ENCODE measurements at regions of chr16 and their contacts with region 1.

Region 1: DNA sequence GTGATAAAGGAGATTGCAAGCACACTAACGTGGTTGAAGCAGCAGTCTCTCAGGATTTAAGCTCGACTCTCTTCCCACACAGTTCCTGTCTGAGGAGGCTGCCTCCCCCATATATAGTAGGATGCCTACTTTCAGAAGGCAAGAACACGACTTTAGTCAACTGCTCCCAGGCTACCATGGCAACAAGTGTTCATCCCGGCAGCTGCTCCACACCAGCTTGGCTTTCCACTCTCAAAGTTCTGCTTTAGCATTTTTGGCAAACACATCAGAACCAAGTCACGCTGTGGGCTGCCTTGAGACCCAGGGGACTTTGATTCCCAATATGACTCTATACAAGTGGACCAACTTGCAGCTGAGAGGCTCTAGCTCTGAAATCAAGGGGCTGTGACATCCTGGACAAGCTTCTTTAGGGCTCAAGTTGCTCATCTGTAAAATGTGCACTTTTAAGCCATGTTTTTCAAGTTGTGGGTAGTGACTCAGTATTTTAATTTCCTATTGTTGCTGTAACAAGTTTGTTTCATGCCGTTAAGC is 16.5 kb downstream of the ZP2 start:
- DNase-seq: no peak
- ATAC-seq: no peak
- H3K4me3 ChIP-seq: no peak overlapping the region
- H3K27ac ChIP-seq: no peak overlapping the region
- H3K4me1 ChIP-seq: no peaks in the 10 kb centered on the region
- H3K27me3 ChIP-seq: peaks cover 14% of the 10 kb centered on the region
- CTCF ChIP-seq: no peak

Region 2: GRCh38 chr16:21277927-21278706 is 83.3 kb after region 1 on chr16 and contains the start of gene CRYM:
- CTCF ChIA-PET with region 1: no interaction called
- POLR2A ChIA-PET with region 1: no interaction called
- in situ Hi-C with region 1: loop called (anchors 25 kb)
- intact Hi-C with region 1: loop called (anchors 10 kb)
- DNase-seq: no peak
- ATAC-seq: peak; percentile 97
- H3K4me3 ChIP-seq: peak within 1 kb of the TSS; percentile 39 to 57
- H3K27ac ChIP-seq: no peak within 1 kb of the TSS
- H3K4me1 ChIP-seq: peaks cover 5% of the 10 kb centered on the region
- H3K27me3 ChIP-seq: peaks cover 46% of the 10 kb centered on the region
- CTCF ChIP-seq: peak; percentile 93
- total RNA-seq, gene CRYM: 0.41 TPM

Measured in Panc1 (cell line).